MCF 10A (cell line): ENCODE measurements at regions of chr3 and their contacts with region 1.

Region 1: DNA sequence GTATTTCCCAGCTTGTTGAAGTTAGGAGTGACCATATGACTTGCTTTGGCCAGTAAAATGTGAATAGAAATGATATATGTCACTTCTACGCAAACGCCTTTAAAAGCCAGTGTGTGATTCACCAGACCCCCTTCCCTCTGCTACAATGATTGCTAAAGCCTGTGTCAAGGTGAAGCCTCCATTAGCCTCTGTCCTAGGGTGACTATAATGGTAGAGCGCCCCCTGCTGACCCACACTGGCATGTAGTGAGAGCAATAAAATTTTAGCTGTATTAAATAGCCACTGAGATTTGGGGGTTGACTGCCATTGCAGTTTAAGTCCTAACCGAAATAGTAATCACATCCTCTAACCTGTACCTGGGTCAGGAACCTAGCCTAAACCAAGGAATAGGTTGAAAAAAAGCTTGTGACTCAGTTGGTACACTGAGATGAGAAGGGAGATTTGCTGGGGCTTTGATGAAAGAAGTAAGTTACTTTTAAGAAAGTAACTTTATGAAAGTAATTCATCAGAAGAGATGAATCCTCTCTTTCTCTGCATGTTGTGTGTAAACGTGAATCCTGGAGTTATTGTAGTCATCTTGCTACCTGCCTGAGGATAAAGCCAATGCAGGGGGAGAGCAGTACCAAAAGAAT is 52.6 kb downstream of the GTF2E1 start:
- DNase-seq: peak; percentile 87
- H3K4me3 Mint-ChIP-seq: no peak overlapping the region
- H3K27ac Mint-ChIP-seq: no peak overlapping the region
- H3K4me1 Mint-ChIP-seq: peaks cover 8% of the 10 kb centered on the region
- H3K27me3 Mint-ChIP-seq: no peaks in the 10 kb centered on the region
- CTCF ChIP-seq: peak; percentile 87

Region 2: DNA sequence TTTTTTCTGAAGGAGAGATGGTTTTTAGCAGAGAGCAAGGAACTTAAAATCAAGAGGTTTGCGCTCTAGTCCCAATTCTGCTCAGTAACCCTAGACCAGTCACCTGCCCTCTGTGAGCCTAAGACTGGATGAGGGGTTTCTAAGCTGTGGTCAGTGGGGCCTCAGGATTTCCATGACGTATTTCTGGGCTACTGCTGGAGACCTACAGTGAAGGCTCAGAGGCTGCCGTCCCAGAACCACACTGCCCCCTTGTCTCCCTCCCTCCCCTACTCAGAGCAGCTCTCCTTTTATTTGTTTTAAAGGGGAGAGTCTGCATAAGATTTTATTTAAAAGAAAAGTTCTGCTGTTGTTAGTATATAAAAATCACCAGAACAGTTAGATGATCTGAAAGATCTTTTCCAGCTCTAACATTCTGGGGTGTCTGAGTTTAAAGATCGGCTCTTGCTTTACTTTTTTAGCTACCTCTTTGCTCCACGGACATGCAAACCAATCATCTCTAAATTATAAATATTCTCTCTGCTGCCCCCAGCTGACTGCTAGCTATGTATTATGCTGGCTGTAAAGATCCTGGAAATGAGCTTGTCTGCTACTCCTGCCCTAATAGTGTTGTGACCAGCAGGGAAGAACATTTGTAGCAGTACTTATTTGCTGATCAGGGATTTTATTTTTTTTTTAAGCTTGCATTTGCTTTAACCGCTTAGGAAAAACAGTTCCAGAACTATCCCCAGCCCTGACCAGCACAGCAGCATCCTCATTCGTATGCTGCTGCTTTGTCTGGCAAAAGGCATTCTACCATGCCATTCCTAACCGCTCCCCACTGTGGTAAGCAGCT is 227.5 kb before region 1 on chr3:
- CTCF ChIA-PET with region 1: interaction called, 111 read pairs
- POLR2A ChIA-PET with region 1: no interaction called
- intact Hi-C with region 1: no loop called
- DNase-seq: peak; percentile 45
- H3K4me3 Mint-ChIP-seq: peak overlapping the region; percentile 49
- H3K27ac Mint-ChIP-seq: peak overlapping the region; percentile 29
- H3K4me1 Mint-ChIP-seq: no peaks in the 10 kb centered on the region
- H3K27me3 Mint-ChIP-seq: no peaks in the 10 kb centered on the region
- CTCF ChIP-seq: peak; percentile 6

Region 3: DNA sequence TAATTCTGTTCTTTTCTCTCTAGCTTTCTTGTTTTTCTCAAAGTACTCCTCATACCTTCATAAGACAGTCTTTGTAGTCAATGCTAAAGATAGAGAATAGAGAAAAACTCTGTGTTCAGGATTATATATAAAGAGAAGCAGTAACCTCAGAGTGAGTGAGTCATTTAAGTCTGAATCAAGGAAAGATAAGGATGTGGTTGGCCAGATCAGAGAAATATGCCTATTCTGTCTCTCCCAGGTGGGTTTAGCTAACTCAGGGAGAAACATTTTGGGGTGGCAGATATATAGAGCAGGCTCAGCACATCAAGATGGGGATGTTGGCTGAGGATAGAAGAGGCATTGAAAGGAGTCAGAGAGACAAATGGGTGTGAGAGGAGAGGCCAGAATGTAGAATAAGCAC is 21.2 kb before region 1 on chr3:
- CTCF ChIA-PET with region 1: interaction called, 44 read pairs
- POLR2A ChIA-PET with region 1: no interaction called
- intact Hi-C with region 1: no loop called
- DNase-seq: no peak
- H3K4me3 Mint-ChIP-seq: no peak overlapping the region
- H3K27ac Mint-ChIP-seq: no peak overlapping the region
- H3K4me1 Mint-ChIP-seq: no peaks in the 10 kb centered on the region
- H3K27me3 Mint-ChIP-seq: no peaks in the 10 kb centered on the region
- CTCF ChIP-seq: no peak

Region 4: DNA sequence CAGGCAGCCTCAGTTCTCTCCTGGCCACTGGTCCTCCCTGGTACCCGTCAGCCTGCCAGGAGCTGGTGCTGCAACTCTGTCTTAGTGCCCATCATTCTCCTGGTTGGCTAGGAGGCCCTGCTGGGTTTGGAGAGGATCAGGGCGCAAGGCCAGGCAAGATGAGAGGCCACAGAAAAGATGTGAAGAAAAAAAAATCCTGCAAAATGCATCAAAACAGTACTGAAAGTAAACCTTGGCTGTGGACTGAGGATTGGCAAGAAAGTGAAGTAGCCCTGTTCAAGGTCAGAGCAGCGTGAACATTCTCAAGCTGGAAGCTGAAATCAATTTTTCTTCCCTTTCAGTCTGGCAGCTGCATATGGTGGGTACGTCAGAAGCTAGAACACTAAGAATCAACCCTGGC is 21.6 kb after region 1 on chr3:
- CTCF ChIA-PET with region 1: interaction called, 31 read pairs
- POLR2A ChIA-PET with region 1: interaction called, 3 read pairs
- intact Hi-C with region 1: no loop called
- DNase-seq: no peak
- H3K4me3 Mint-ChIP-seq: no peak overlapping the region
- H3K27ac Mint-ChIP-seq: no peak overlapping the region
- H3K4me1 Mint-ChIP-seq: no peaks in the 10 kb centered on the region
- H3K27me3 Mint-ChIP-seq: peaks cover 55% of the 10 kb centered on the region
- CTCF ChIP-seq: no peak